ENCODE measurements at regions of chr6 and their contacts with region 1.

Region 1: DNA sequence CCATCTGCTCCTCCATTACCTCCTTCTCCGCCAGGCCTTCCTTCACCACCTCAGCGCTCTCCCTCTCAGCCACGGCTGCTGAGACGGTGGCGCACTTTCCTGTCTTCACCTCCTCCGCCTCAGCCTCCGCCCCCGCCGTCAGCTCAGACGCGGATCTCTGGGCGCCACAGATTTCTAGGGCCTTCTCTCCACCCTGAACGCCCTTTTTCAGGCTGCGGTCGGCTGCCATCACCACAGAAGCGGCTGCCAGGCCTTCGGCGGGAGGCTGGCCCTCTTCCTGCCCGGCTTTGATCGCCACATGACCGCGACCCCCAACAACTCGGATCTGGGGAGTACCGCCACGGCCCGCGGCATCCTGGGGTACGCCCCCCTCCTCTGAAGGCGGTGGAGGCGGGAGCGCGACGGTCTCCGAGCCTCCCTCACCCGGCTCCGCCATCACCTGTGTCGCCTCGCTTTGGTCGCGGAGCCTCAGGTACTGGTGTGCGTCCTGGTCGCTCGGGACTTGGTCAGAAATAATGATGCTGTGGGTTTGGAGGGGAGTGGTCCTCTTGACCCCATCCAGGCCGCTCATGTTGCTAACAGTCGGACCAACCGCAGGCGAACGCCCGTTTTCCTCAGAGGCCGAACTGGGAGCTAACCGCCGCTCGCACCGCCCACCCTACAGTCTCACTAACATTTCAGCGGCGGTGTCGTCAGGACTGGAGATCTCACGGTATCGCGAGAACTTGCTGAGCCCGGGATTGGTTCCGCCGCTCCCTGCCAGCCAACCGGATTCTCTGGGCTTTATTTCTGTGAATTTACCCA is at the start of gene TSPYL1:
- DNase-seq: peak; percentile 97
- ATAC-seq: peak; percentile 92
- H3K4me3 Mint-ChIP-seq: peak within 1 kb of the TSS; percentile 96
- H3K27ac Mint-ChIP-seq: peak within 1 kb of the TSS; percentile 99
- H3K4me1 Mint-ChIP-seq: peaks cover 32% of the 10 kb centered on the region
- H3K27me3 Mint-ChIP-seq: no peaks in the 10 kb centered on the region
- CTCF ChIP-seq: no peak
- total RNA-seq, gene TSPYL1: 38.5 to 38.6 TPM

Region 2: DNA sequence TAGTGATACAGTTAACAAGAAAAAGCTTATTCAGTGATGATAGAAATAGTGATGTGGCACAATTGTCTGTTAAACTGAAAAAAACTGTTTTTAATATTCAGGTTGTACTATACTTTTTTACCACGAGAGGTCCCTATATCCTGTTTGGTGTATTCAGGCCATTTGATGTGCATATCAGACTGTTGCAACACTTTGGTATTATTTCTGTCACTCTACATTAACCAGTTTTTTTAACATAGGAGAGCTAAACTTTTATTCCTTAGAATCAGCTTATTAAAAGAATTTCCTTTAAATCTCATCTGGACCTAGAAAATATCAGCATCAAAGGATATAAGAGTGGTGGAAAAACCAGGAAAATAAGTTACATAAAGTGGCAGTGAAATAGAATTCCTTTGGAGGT is 62.4 kb before region 1 on chr6:
- CTCF ChIA-PET with region 1: interaction called, 15 read pairs
- POLR2A ChIA-PET with region 1: no interaction called
- intact Hi-C with region 1: no loop called
- DNase-seq: no peak
- ATAC-seq: peak; percentile 82
- H3K4me3 Mint-ChIP-seq: no peak overlapping the region
- H3K27ac Mint-ChIP-seq: peak overlapping the region; percentile 57
- H3K4me1 Mint-ChIP-seq: peaks cover 6% of the 10 kb centered on the region
- H3K27me3 Mint-ChIP-seq: no peaks in the 10 kb centered on the region
- CTCF ChIP-seq: peak; percentile 60

Region 3: GRCh38 chr6:116268589-116269293 is 10.7 kb before region 1 on chr6:
- CTCF ChIA-PET with region 1: interaction called, 15 read pairs
- POLR2A ChIA-PET with region 1: interaction called, 6 read pairs
- intact Hi-C with region 1: no loop called
- DNase-seq: no peak
- ATAC-seq: peak; percentile 68
- H3K4me3 Mint-ChIP-seq: no peak overlapping the region
- H3K27ac Mint-ChIP-seq: peak overlapping the region; percentile 43
- H3K4me1 Mint-ChIP-seq: peaks cover 33% of the 10 kb centered on the region
- H3K27me3 Mint-ChIP-seq: no peaks in the 10 kb centered on the region
- CTCF ChIP-seq: peak; percentile 66

Region 4: GRCh38 chr6:116369964-116370759 is 90.7 kb after region 1 on chr6:
- CTCF ChIA-PET with region 1: no interaction called
- POLR2A ChIA-PET with region 1: no interaction called
- intact Hi-C with region 1: loop called (anchors 5 kb)
- DNase-seq: peak; percentile 18
- ATAC-seq: peak; percentile 52
- H3K4me3 Mint-ChIP-seq: peak overlapping the region; percentile 73
- H3K27ac Mint-ChIP-seq: peak overlapping the region; percentile 46
- H3K4me1 Mint-ChIP-seq: peaks cover 10% of the 10 kb centered on the region
- H3K27me3 Mint-ChIP-seq: peaks cover 14% of the 10 kb centered on the region
- CTCF ChIP-seq: no peak

Region 5: DNA sequence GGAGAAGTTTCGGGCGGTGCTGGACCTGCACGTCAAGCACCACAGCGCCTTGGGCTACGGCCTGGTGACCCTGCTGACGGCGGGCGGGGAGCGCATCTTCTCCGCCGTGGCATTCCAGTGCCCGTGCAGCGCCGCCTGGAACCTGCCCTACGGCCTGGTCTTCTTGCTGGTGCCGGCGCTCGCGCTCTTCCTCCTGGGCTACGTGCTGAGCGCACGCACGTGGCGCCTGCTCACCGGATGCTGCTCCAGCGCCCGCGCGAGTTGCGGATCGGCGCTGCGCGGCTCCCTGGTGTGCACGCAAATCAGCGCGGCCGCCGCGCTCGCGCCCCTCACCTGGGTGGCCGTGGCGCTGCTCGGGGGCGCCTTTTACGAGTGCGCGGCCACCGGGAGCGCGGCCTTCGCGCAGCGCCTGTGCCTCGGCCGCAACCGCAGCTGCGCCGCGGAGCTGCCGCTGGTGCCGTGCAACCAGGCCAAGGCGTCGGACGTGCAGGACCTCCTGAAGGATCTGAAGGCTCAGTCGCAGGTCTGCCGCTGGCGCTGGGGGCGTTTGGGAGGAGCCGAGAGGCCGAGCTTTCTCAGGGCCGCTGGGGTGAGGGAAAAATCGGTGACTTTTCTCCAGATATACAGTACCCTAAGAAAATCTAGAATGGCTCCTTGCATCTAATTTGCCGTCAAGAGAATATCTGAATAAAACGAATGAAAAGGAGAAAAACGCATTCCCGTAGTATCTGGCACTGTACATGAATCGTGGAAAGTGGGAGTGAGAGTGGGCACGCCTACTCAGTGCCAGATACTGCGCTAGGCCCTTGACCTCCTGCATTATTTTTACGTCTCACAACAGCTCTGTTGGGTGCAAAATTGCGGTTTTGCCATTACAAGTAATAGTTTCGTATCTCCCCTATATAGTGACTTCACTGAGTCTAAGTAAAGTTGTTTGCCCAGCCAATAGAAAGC is 182.7 kb after region 1 on chr6:
- CTCF ChIA-PET with region 1: no interaction called
- POLR2A ChIA-PET with region 1: no interaction called
- intact Hi-C with region 1: loop called (anchors 5 kb)
- DNase-seq: peak; percentile 72
- ATAC-seq: peak; percentile 93
- H3K4me3 Mint-ChIP-seq: peak overlapping the region; percentile 69
- H3K27ac Mint-ChIP-seq: peak overlapping the region; percentile 62
- H3K4me1 Mint-ChIP-seq: peaks cover 18% of the 10 kb centered on the region
- H3K27me3 Mint-ChIP-seq: peaks cover 25% of the 10 kb centered on the region
- CTCF ChIP-seq: peak; percentile 11

Region 6: DNA sequence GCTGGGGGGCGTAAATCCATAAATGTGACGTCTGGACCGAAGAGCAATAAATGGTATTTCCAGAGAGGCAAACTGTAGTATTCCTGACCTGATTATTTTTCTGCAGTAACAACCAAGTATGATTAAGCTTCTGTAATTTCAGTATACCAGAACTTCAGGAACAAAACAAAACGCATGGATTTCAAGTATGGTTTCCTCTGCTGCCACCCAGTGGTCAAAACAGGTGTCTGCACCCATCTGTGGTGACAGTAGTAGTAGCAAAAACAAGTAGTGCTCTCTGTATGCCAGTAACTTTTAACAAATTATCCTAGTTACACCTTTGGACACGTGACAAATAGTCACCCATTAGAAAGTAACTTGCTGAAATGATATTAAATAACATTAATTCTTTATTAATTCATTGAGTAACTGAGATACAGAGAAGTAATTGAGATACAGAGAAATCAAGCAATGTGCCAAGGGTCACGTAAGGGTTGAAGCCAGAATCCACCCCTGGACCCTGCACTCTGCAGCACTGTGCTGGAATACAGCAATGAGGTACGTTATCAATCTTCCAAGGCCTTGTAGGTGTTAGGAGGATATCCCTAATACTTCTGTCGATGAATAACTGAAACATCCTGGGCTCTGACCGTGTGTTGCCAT is 282.0 kb after region 1 on chr6:
- CTCF ChIA-PET with region 1: interaction called, 9 read pairs
- POLR2A ChIA-PET with region 1: no interaction called
- intact Hi-C with region 1: loop called (anchors 10 kb)
- DNase-seq: peak; percentile 84
- ATAC-seq: peak; percentile 83
- H3K4me3 Mint-ChIP-seq: no peak overlapping the region
- H3K27ac Mint-ChIP-seq: no peak overlapping the region
- H3K4me1 Mint-ChIP-seq: no peaks in the 10 kb centered on the region
- H3K27me3 Mint-ChIP-seq: peaks cover 2% of the 10 kb centered on the region
- CTCF ChIP-seq: peak; percentile 82

Measured in activated CD8-positive, alpha-beta T cell treated with anti-CD3 and anti-CD28 coated beads for 36 hours (primary cell).